Right ventricle myocardium superior (tissue), 1 donor: ENCODE measurements at regions of chr20 and their contacts with region 1.

Region 1: DNA sequence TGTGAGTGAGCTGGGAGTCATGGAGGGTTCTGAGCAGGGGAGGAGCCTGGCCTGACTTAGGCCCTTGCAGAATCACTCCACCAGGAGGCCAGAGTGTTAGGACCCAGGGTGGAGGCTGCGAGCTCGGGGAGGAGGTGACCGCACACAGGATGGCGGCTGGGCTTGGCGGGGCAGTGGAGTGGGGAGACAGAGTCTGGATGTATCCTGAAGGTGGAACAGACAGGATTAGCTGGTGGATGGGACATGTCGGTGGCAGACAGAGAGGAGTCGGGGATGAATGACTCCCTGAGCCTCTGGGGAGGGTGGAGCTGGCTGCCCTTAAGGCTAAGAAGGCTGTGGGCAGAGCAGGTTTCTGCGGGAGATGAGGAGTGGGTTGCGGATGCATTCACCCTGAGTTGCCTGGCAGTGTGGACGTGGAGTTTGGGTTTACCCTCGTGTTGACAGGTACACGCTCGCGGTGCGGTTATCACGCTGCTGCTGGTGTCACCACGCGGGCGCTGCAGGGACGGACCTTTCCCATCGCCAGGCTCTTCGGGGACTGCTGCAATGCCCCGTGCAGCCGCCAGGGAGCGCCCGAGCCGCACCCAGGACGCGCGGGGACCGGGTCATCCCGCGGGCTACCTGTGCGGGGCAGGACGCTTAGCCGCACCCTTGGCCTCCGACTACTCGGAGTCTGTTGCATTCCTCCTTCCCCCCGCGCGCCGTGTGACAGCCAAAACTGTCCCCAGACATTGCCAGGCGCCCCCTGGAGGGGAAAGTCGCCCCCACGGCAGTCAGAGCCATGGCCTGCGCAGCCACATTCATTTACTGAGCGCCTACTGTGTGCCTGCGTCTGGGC is 43.0 kb upstream of the PTGIS start:
- DNase-seq: peak; percentile 87
- ATAC-seq: peak; percentile 78

Region 2: GRCh38 chr20:48999890-49000870 is 610.7 kb before region 1 on chr20:
- intact Hi-C with region 1: no loop called
- DNase-seq: no peak
- ATAC-seq: no peak

Region 3: GRCh38 chr20:49338061-49338460 is 272.9 kb before region 1 on chr20:
- intact Hi-C with region 1: loop called (anchors 10 kb)
- DNase-seq: no peak
- ATAC-seq: no peak

Region 4: GRCh38 chr20:49349694-49350093 is 261.2 kb before region 1 on chr20:
- intact Hi-C with region 1: no loop called
- DNase-seq: no peak
- ATAC-seq: no peak

Region 5: GRCh38 chr20:49541733-49542513 is 69.0 kb before region 1 on chr20:
- intact Hi-C with region 1: loop called (anchors 2 kb)
- DNase-seq: peak; percentile 76
- ATAC-seq: peak; percentile 82

Region 6: DNA sequence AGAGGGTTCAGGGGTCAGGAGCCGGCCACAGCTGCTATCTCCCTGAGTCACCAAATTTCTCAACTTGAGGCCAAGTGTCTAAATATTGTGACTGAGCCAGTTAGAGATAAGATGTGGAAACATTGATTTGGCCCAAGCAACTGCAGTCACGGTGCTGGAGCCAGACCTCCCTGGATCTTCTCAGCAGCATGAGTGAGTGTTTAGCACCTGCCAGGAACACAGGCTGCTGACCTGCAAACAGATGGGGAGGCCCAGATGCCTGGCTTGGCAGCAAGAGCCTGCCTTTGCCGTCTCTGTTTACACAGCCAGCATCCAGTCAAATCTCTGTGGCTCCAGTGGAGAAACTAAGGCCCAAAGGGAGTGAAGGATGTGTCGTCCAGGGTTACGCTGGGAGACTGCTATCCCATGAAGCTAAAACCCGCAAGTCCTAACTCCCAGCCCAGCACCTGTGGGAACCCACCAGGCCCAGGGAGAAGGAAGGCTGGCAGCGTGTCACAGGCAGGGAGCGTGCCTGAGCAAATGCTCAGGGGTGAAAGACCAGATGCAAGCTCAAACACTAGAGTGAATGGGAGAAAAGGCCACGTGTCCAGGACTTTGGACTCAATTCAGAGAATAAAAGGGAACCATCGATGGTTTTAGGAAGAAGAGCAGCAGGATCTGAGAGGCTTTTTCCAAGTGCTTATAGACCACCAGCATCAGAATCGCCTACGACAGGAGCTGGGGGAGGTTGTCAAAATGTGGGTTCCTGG is 27.1 kb before region 1 on chr20:
- intact Hi-C with region 1: no loop called
- DNase-seq: peak; percentile 85
- ATAC-seq: peak; percentile 89

Region 7: GRCh38 chr20:49713753-49714712 is 103.1 kb after region 1 on chr20 and contains the start of gene B4GALT5:
- intact Hi-C with region 1: loop called (anchors 10 kb)
- DNase-seq: peak; percentile 80
- ATAC-seq: peak; percentile 89
- total RNA-seq, gene B4GALT5: 39.6 TPM

Region 8: DNA sequence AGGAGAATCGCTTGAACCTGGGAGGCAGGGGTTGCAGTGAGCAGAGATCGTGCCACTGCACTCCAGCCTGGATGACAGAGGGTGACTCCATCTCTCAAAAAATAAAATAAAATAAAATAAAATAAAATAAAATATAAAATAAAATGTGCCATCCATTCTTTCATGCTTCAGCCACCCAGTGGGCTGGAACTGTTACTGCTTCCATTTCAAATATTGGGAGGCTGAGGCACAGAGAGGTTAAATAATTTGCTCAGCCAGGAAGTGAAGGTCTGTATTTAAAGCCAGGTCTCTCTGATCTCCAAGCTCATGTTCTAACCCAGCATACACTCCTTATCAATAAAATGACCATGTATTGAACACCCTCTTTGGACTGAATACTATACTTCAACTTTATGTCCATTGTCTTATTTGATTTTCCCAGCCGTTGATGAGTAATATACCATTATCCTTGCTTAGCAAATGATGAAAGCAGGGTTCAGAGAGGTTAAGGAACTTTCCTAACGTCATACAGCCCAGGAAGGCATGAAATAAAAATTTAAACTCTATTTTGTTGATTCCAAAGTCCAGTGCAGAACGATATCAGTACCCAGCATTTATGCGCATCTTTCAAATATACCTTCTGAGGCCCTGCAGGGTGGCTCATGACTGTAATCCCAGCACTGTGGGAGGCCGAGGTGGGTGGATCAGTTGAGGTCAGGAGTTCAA is 175.9 kb after region 1 on chr20:
- intact Hi-C with region 1: no loop called
- DNase-seq: no peak
- ATAC-seq: no peak

Region 9: DNA sequence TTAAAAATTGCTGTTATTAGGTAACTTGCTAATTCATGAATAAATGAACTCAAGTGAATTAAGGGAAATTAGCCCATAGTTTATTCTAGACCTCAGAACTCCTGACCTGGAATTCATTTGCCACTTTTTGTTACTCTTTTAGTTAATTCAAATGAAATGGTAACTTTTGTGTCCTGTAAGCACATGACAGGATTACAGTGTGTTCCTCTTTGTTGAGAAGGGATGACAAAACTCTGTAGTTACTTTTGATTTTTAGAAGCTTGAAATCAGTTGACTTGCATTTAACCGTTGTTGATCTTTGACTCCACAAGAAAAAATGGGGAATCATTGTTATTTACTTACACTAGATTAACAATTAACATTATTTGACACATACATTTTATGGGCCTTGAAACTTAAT is 207.9 kb after region 1 on chr20:
- intact Hi-C with region 1: loop called (anchors 5 kb)
- DNase-seq: no peak
- ATAC-seq: no peak

Region 10: GRCh38 chr20:49846206-49846807 is 235.4 kb after region 1 on chr20:
- intact Hi-C with region 1: loop called (anchors 2 kb)
- DNase-seq: no peak
- ATAC-seq: peak; percentile 75

Region 11: GRCh38 chr20:49889935-49890333 is 279.0 kb after region 1 on chr20:
- intact Hi-C with region 1: loop called (anchors 5 kb)
- DNase-seq: no peak
- ATAC-seq: no peak